ENCODE measurements at regions of chr6 and their contacts with region 1.

Region 1: DNA sequence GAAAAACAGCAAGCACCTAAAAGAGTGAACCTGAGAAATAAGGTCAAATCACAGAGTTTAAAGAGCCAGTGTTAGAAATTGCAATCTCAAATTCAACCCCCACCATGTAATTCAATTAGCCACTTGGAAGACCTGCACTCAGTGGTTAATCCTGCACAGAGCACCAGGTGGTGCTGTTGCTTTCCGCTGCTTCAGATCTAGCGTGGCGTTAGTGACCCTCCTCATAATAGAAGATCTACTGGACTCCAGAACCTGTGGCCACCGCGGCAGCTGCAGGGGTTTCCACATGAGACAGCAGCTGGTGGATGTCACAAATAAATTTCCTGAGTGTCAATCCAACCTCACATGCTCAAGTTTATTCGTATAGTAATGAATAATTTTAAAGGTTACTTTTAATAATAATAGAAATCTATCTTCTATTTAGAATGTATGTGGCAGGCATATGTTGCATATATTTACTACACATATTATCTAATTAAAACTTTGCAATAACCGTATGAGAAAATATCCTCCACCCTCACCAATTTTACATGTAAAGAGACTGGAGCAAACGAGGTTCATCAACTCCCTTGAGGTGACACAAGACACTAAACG is 84.4 kb downstream of the SYNE1 start:
- DNase-seq: peak; percentile 55
- H3K4me3 ChIP-seq: peak overlapping the region in 1 of 2 experiments; percentile 49; a peak in 1 of 4 replicates
- H3K27ac ChIP-seq: no peak overlapping the region
- H3K4me1 ChIP-seq: peaks cover 0 to 5% of the 10 kb centered on the region in 2 experiments; a peak in 2 of 4 replicates
- H3K27me3 ChIP-seq: no peaks in the 10 kb centered on the region
- CTCF ChIP-seq: peak; percentile 70
- EP300 ChIP-seq: peak in 1 of 2 experiments; percentile 38; a peak in 1 of 4 replicates
- RAD21 ChIP-seq: peak; percentile 88

Region 2: DNA sequence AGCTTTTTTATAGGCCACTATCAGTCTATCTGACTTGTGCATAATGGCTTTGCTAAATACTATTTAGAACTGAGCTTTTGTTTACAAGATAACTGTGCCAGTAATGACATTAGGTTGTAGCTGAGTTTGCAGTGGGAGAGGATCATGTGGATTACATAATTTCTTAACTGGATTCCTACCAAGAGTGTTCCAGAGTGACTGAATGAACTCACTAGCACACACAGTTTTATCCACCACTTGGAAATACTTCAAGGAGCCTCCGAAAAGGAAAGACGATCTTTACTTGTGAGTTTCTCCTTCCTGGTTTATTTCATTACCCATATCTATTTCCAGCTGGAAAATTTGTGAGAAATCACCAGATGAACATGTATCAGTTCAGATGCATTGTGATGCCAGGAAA is 95.4 kb after region 1 on chr6:
- CTCF ChIA-PET with region 1: interaction called, 63 read pairs
- POLR2A ChIA-PET with region 1: interaction called, 3 read pairs
- DNase-seq: no peak
- H3K4me3 ChIP-seq: no peak overlapping the region
- H3K27ac ChIP-seq: no peak overlapping the region
- H3K4me1 ChIP-seq: no peaks in the 10 kb centered on the region; a peak in 2 of 4 replicates
- H3K27me3 ChIP-seq: no peaks in the 10 kb centered on the region
- CTCF ChIP-seq: no peak
- EP300 ChIP-seq: no peak
- RAD21 ChIP-seq: no peak

Region 3: GRCh38 chr6:152954443-152954842 is 401.7 kb after region 1 on chr6:
- CTCF ChIA-PET with region 1: interaction called, 11 read pairs
- POLR2A ChIA-PET with region 1: no interaction called
- DNase-seq: no peak
- H3K4me3 ChIP-seq: no peak overlapping the region
- H3K27ac ChIP-seq: no peak overlapping the region
- H3K4me1 ChIP-seq: peaks cover 0 to 13% of the 10 kb centered on the region in 2 experiments; a peak in 1 of 4 replicates
- H3K27me3 ChIP-seq: no peaks in the 10 kb centered on the region
- CTCF ChIP-seq: no peak
- EP300 ChIP-seq: no peak
- RAD21 ChIP-seq: peak; percentile 37

Measured in SK-N-SH (cell line).